B cell (primary cell): ENCODE measurements at regions of chr11 and their contacts with region 1.

Region 1: DNA sequence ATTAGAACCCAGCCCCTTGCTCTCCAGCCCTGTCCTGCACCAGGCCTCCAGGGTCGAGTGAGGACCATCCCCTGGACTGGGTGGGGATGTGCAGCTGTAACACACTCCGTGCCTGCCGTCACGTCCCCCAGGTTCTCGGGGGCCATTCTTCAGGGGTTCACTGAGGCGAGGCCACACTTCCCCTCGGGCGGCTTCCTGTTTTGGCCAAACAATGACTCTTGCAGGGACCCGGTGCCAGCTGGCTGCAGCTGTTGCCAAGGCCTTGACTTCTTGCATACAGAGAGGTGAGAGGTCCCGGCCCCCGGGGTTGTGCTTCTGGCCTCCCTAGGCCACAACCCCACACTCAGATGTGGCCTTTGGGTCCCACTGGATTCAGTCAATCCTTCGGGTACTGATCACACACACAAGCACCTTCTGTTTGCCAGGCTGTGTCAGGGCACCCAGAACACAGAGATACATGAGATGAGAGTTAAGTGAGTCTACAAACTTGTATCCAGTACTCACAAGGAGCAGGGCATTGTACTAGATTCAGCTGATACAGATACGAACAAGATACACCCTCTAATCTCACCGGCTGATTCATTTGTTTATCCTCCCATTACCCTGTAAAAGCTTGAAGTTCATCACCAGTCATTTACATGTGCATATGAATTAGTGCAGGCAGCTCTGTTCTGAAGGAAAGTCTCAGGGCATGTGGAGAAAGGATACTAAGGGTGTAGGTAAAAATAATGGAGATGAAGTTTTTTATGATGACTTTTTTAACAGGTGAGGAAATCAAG is 32.9 kb downstream of the LRRC32 start:
- DNase-seq: peak; percentile 91
- ATAC-seq: peak; percentile 92
- H3K4me3 ChIP-seq: peak overlapping the region in 2 of 5 experiments; percentile 25 to 35
- H3K4me3 Mint-ChIP-seq: peak overlapping the region; percentile 78
- H3K27ac ChIP-seq: peak overlapping the region; percentile 50 to 72
- H3K27ac Mint-ChIP-seq: peak overlapping the region; percentile 93
- H3K4me1 ChIP-seq: peaks cover 53 to 55% of the 10 kb centered on the region in 2 donors
- H3K4me1 Mint-ChIP-seq: peaks cover 69% of the 10 kb centered on the region
- H3K27me3 ChIP-seq: no peaks in the 10 kb centered on the region
- H3K27me3 Mint-ChIP-seq: peaks cover 18% of the 10 kb centered on the region
- CTCF ChIP-seq: no peak

Region 2: GRCh38 chr11:76588455-76589325 is 49.0 kb before region 1 on chr11:
- CTCF ChIA-PET with region 1: no interaction called
- POLR2A ChIA-PET with region 1: no interaction called
- intact Hi-C with region 1: loop called (anchors 10 kb)
- DNase-seq: peak; percentile 66
- ATAC-seq: peak; percentile 56
- H3K4me3 ChIP-seq: no peak overlapping the region
- H3K4me3 Mint-ChIP-seq: no peak overlapping the region
- H3K27ac ChIP-seq: no peak overlapping the region
- H3K27ac Mint-ChIP-seq: peak overlapping the region; percentile 34
- H3K4me1 ChIP-seq: peaks cover 11 to 17% of the 10 kb centered on the region in 2 donors
- H3K4me1 Mint-ChIP-seq: peaks cover 26% of the 10 kb centered on the region
- H3K27me3 ChIP-seq: no peaks in the 10 kb centered on the region
- H3K27me3 Mint-ChIP-seq: no peaks in the 10 kb centered on the region
- CTCF ChIP-seq: no peak

Region 3: GRCh38 chr11:76626921-76627401 is 10.7 kb before region 1 on chr11:
- CTCF ChIA-PET with region 1: interaction called, 8 read pairs
- POLR2A ChIA-PET with region 1: interaction called, 7 read pairs
- intact Hi-C with region 1: loop called (anchors 1 kb)
- DNase-seq: peak; percentile 93
- ATAC-seq: peak; percentile 63
- H3K4me3 ChIP-seq: peak overlapping the region in 1 of 5 experiments; percentile 30
- H3K4me3 Mint-ChIP-seq: peak overlapping the region; percentile 81
- H3K27ac ChIP-seq: peak overlapping the region in 1 of 2 donors; percentile 63
- H3K27ac Mint-ChIP-seq: peak overlapping the region; percentile 96
- H3K4me1 ChIP-seq: peaks cover 52 to 56% of the 10 kb centered on the region in 2 donors
- H3K4me1 Mint-ChIP-seq: peaks cover 65% of the 10 kb centered on the region
- H3K27me3 ChIP-seq: peaks cover 0 to 19% (median 0%) of the 10 kb centered on the region in 4 experiments
- H3K27me3 Mint-ChIP-seq: peaks cover 27% of the 10 kb centered on the region
- CTCF ChIP-seq: no peak

Region 4: GRCh38 chr11:76860539-76861475 is 223.1 kb after region 1 on chr11 and contains the start of gene ACER3:
- CTCF ChIA-PET with region 1: no interaction called
- POLR2A ChIA-PET with region 1: no interaction called
- intact Hi-C with region 1: no loop called
- DNase-seq: peak; percentile 90
- ATAC-seq: peak; percentile 99
- H3K4me3 ChIP-seq: peak within 1 kb of the TSS; percentile 32 to 81 (median 80)
- H3K4me3 Mint-ChIP-seq: peak within 1 kb of the TSS; percentile 92
- H3K27ac ChIP-seq: peak within 1 kb of the TSS; percentile 69 to 87
- H3K27ac Mint-ChIP-seq: peak within 1 kb of the TSS; percentile 81
- H3K4me1 ChIP-seq: peaks cover 19 to 22% of the 10 kb centered on the region in 2 donors
- H3K4me1 Mint-ChIP-seq: peaks cover 28% of the 10 kb centered on the region
- H3K27me3 ChIP-seq: no peaks in the 10 kb centered on the region
- H3K27me3 Mint-ChIP-seq: no peaks in the 10 kb centered on the region
- CTCF ChIP-seq: no peak
- total RNA-seq, gene ACER3: 11.3 and 12.9 TPM in 2 replicates